Esophagus muscularis mucosa (tissue), 4 donors: ENCODE measurements at regions of chrX and their contacts with region 1.

Region 1: GRCh38 chrX:56563231-56564161 is at the start of gene UBQLN2:
- DNase-seq: no peak
- H3K4me3 ChIP-seq: peak within 1 kb of the TSS; percentile 64 to 77 (median 69)
- H3K27ac ChIP-seq: peak within 1 kb of the TSS; percentile 93 to 96 (median 95)
- H3K4me1 ChIP-seq: peaks cover 0 to 44% (median 20%) of the 10 kb centered on the region in 4 donors
- H3K27me3 ChIP-seq: no peaks in the 10 kb centered on the region
- CTCF ChIP-seq: peak in 1 of 3 experiments; percentile 8
- EP300 ChIP-seq: no peak
- POLR2A ChIP-seq: peak; percentile 64
- total RNA-seq, gene UBQLN2: 26.2 to 39.7 (median 28.9) TPM

Region 2: DNA sequence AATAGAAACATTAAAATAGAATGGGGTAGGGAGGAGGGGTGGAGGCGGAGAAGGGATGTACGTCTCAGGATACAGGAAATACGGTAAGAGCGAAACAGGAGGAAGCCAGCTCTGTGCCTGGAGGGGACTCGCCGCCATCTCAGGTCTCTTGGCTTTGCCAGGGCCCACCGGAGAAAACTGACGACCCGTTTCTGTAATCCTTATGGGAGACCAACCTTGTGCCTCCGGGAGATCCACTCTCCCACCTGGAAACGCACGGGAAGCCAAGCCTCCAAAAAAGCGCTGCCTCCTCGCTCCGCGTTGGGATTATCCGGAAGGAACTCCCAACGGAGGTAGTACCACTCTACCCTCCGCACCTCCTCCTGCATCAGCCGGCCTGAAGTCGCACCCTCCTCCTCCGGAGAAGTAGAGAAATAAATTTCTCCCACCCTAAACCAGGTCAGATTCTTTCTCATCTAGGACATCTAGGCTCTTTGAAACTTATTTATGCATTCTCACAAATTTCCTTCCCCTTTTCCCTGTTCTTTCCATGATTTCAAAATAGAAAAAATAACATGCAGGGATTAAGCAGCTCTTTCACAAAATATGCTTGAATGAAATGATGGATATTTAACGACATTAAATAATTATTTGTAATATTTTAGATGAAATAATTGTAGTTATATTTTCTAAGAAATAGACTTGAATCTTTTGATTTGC is 165.8 kb after region 1 on chrX and contains the start of gene NBDY:
- intact Hi-C with region 1: loop called (anchors 5 kb)
- DNase-seq: no peak
- H3K4me3 ChIP-seq: peak within 1 kb of the TSS; percentile 56 to 70 (median 64)
- H3K27ac ChIP-seq: peak within 1 kb of the TSS; percentile 73 to 83 (median 76)
- H3K4me1 ChIP-seq: peaks cover 0 to 22% (median 15%) of the 10 kb centered on the region in 4 donors
- H3K27me3 ChIP-seq: no peaks in the 10 kb centered on the region
- CTCF ChIP-seq: no peak
- EP300 ChIP-seq: no peak
- POLR2A ChIP-seq: no peak
- total RNA-seq, gene NBDY: 11.8 to 19.4 (median 18.7) TPM

Region 3: DNA sequence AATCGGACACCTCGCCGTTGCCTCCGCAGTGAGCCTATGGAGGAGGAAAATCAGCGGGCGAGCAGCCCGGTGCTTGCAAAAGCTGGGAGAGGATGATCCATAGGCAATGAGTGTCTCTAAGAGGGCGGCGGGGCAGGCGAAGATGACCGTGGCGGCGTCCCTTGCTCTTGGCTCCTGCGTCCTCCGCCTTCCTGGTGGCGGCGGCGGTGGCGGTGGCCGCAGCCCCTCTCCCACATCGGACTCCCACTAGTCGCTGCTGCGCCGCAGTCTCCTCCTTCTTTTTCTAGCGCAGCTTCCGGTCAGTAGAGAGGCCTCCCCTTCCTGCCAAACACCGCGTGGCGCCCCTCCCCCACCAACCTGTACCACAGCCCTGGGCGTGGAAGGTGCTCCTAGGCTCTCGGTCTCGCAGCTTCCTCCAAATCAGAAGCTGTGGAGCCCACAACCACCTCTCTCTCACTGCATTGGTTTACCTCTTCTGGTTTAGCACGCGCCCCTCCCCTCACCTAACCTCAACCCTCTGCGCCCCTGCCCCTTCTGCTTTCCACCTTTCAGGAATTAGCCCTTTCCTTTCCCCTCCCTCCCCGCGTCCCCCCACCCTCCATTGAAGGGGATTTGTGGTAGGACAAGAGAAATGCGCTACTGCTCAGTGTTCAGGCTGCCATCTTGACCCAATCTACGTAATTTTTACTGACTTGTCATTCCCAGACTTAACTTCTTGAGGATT is 431.9 kb after region 1 on chrX and contains the start of gene SPIN3:
- intact Hi-C with region 1: loop called (anchors 10 kb)
- DNase-seq: peak; percentile 92
- H3K4me3 ChIP-seq: peak within 1 kb of the TSS; percentile 65 to 79 (median 68)
- H3K27ac ChIP-seq: peak within 1 kb of the TSS; percentile 73 to 82 (median 75)
- H3K4me1 ChIP-seq: peaks cover 0 to 11% (median 8%) of the 10 kb centered on the region in 4 donors
- H3K27me3 ChIP-seq: peaks cover 0 to 3% (median 0%) of the 10 kb centered on the region in 4 donors
- CTCF ChIP-seq: no peak
- EP300 ChIP-seq: no peak
- POLR2A ChIP-seq: no peak
- total RNA-seq, gene SPIN3: 5.0 to 9.7 (median 7.2) TPM